Activated T-helper 2 cell treated with anti-CD3 and anti-CD28 coated beads, Interferon-gamma antibody, Interleukin-2, Interleukin-4, amounts not matched to agents 10 μg/mL and 5 μg/mL and 100 μg/mL, durations not matched to agents 14 hours and 24 hours and 36 hours (primary cell): ENCODE measurements at regions of chr4 and their contacts with region 1.

Region 1: GRCh38 chr4:184282251-184282713 is 64.6 kb upstream of the ENPP6 start:
- DNase-seq: peak; percentile 52
- H3K4me3 Mint-ChIP-seq: no peak overlapping the region
- H3K27ac Mint-ChIP-seq: peak overlapping the region; percentile 92
- H3K4me1 Mint-ChIP-seq: peaks cover 63% of the 10 kb centered on the region
- H3K27me3 Mint-ChIP-seq: no peaks in the 10 kb centered on the region

Region 2: GRCh38 chr4:184136525-184136924 is 145.8 kb before region 1 on chr4:
- intact Hi-C with region 1: no loop called
- DNase-seq: no peak
- H3K4me3 Mint-ChIP-seq: no peak overlapping the region
- H3K27ac Mint-ChIP-seq: no peak overlapping the region
- H3K4me1 Mint-ChIP-seq: no peaks in the 10 kb centered on the region
- H3K27me3 Mint-ChIP-seq: peaks cover 18% of the 10 kb centered on the region

Region 3: GRCh38 chr4:184318852-184319251 is 36.6 kb after region 1 on chr4:
- intact Hi-C with region 1: loop called (anchors 1 kb)
- DNase-seq: peak; percentile 8
- H3K4me3 Mint-ChIP-seq: no peak overlapping the region
- H3K27ac Mint-ChIP-seq: peak overlapping the region; percentile 24
- H3K4me1 Mint-ChIP-seq: peaks cover 44% of the 10 kb centered on the region
- H3K27me3 Mint-ChIP-seq: no peaks in the 10 kb centered on the region

Region 4: GRCh38 chr4:184538023-184538599 is 255.8 kb after region 1 on chr4:
- intact Hi-C with region 1: loop called (anchors 1 kb)
- DNase-seq: peak; percentile 53
- H3K4me3 Mint-ChIP-seq: peak overlapping the region; percentile 85
- H3K27ac Mint-ChIP-seq: peak overlapping the region; percentile 87
- H3K4me1 Mint-ChIP-seq: peaks cover 61% of the 10 kb centered on the region
- H3K27me3 Mint-ChIP-seq: no peaks in the 10 kb centered on the region

Region 5: DNA sequence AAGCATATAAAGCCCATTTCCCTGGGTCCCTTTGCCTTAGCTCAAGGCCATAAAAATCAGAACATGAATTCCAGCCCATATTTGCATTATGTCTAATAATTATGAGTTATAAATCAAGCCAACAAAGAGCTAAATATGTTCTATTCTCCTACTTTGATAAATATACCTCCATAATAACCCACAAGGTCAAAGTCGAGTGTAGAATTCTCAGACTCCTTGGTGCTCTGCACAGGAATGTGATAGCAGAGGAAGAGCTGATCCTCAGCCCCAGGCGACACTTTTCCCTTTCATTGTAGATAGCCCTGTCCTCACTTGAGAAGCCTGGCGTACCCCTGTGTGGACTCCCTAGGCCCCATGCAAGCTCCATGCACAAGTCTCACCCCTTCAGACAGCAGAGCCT is 281.3 kb after region 1 on chr4:
- intact Hi-C with region 1: no loop called
- DNase-seq: no peak
- H3K4me3 Mint-ChIP-seq: no peak overlapping the region
- H3K27ac Mint-ChIP-seq: no peak overlapping the region
- H3K4me1 Mint-ChIP-seq: peaks cover 23% of the 10 kb centered on the region
- H3K27me3 Mint-ChIP-seq: no peaks in the 10 kb centered on the region